Spleen (tissue), 13 donors: ENCODE measurements at regions of chr20 and their contacts with region 1.

Region 1: DNA sequence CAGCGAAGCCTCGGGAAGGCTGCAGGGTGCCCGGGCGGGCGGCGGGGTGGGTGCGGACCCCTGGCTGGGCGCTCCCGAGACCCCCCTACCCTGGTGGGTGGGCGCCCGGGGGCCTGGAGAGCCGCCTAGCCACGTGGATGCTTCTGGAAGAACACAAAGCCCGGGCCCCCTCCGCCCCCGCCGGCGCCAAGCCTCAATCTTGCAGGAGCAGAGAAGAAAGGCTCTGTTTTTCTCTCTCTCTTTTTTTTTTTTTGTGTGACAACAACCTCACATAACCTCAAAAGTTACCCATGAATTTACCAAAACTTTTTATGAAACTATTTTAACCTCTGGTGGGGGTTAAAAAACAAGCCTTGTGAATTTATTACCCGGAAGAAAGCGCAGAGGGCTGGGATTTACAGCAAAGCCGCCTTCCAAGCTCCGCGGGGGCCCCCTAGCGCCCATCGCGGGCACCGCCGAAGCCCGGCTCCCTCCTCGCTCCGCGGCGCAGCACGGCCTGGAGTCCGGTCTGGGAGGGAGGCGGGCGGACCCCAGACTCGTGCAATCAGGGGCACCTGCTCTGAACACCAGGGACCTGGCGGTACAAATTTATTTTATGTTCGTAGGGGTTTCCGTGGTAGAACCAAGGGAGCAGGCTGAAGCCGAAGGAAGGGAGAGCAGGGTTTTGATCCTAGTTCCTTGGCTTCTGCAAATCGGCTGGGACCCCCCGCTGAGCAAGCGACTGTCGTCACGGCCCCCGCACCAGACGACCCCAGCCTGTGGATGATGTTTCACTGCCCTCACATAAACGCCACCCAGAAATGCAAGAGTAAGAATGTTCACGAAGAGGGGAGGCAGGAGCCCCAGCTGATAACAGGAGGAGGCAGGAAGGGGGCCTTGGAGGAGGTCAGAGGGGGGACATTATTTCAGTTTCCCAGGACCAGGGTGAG is 58.9 kb downstream of the ZNF831 start:
- DNase-seq: peak; percentile 95
- H3K4me3 ChIP-seq: peak overlapping the region; percentile 37 to 70 (median 48)
- H3K27ac ChIP-seq: peak overlapping the region in 7 of 8 donors; percentile 2 to 75 (median 39)
- H3K4me1 ChIP-seq: peaks cover 10 to 30% (median 21%) of the 10 kb centered on the region in 6 donors
- H3K27me3 ChIP-seq: peaks cover 0 to 28% (median 7%) of the 10 kb centered on the region in 7 donors
- CTCF ChIP-seq: peak; percentile 77 to 98 (median 95)
- POLR2A ChIP-seq: no peak

Region 2: GRCh38 chr20:59087829-59088433 is 134.6 kb before region 1 on chr20:
- intact Hi-C with region 1: loop called (anchors 5 kb)
- DNase-seq: peak; percentile 95
- H3K4me3 ChIP-seq: no peak overlapping the region
- H3K27ac ChIP-seq: no peak overlapping the region
- H3K4me1 ChIP-seq: peaks cover 0 to 13% (median 8%) of the 10 kb centered on the region in 6 donors
- H3K27me3 ChIP-seq: no peaks in the 10 kb centered on the region
- CTCF ChIP-seq: peak; percentile 69 to 98 (median 95)
- POLR2A ChIP-seq: no peak

Region 3: GRCh38 chr20:59495894-59496510 is 273.5 kb after region 1 on chr20:
- intact Hi-C with region 1: loop called (anchors 10 kb)
- DNase-seq: peak; percentile 87
- H3K4me3 ChIP-seq: no peak overlapping the region
- H3K27ac ChIP-seq: no peak overlapping the region
- H3K4me1 ChIP-seq: peaks cover 0 to 5% (median 0%) of the 10 kb centered on the region in 6 donors
- H3K27me3 ChIP-seq: peaks cover 0 to 54% (median 10%) of the 10 kb centered on the region in 7 donors
- CTCF ChIP-seq: peak; percentile 31 to 94 (median 82)
- POLR2A ChIP-seq: no peak